ENCODE measurements at regions of chr7 and their contacts with region 1.

Region 1: GRCh38 chr7:19700936-19701335 is 7.9 kb downstream of the POLR1F start:
- DNase-seq: no peak
- H3K4me3 ChIP-seq: no peak overlapping the region
- H3K27ac ChIP-seq: no peak overlapping the region
- H3K4me1 ChIP-seq: no peaks in the 10 kb centered on the region
- H3K27me3 ChIP-seq: no peaks in the 10 kb centered on the region
- CTCF ChIP-seq: no peak
- EP300 ChIP-seq: no peak
- POLR2A ChIP-seq: no peak
- RAD21 ChIP-seq: no peak

Region 2: GRCh38 chr7:19648791-19649190 is 52.1 kb before region 1 on chr7:
- CTCF ChIA-PET with region 1: no interaction called
- POLR2A ChIA-PET with region 1: no interaction called
- DNase-seq: no peak
- H3K4me3 ChIP-seq: no peak overlapping the region
- H3K27ac ChIP-seq: no peak overlapping the region
- H3K4me1 ChIP-seq: no peaks in the 10 kb centered on the region; a peak in 1 of 7 replicates
- H3K27me3 ChIP-seq: no peaks in the 10 kb centered on the region
- CTCF ChIP-seq: no peak
- EP300 ChIP-seq: no peak
- POLR2A ChIP-seq: no peak
- RAD21 ChIP-seq: no peak

Region 3: DNA sequence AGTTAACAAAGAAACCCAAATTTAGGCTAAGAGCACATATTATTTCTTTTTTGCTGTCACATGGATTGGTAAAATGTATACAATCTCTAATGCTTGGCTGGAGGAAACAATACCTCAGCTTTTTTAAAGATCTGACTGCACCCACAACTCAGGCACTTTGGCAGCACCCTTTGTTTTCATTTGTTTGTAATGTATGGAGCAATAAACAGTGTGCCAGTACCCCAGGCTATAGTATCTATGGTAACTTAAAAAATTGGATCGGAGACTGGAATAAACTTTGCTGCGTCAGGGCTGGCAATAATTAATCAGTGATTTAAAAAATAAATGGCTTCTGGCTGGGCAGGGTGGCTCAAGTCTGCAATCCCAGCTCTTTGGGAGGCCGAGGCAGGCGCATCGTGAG is 19.3 kb before region 1 on chr7:
- CTCF ChIA-PET with region 1: no interaction called
- POLR2A ChIA-PET with region 1: no interaction called
- DNase-seq: no peak
- H3K4me3 ChIP-seq: no peak overlapping the region
- H3K27ac ChIP-seq: no peak overlapping the region
- H3K4me1 ChIP-seq: no peaks in the 10 kb centered on the region
- H3K27me3 ChIP-seq: no peaks in the 10 kb centered on the region
- CTCF ChIP-seq: no peak
- EP300 ChIP-seq: no peak
- POLR2A ChIP-seq: no peak
- RAD21 ChIP-seq: no peak

Region 4: GRCh38 chr7:19713676-19714075 is 12.7 kb after region 1 on chr7:
- CTCF ChIA-PET with region 1: interaction called, 16 read pairs
- POLR2A ChIA-PET with region 1: interaction called, 6 read pairs
- DNase-seq: no peak
- H3K4me3 ChIP-seq: no peak overlapping the region
- H3K27ac ChIP-seq: no peak overlapping the region
- H3K4me1 ChIP-seq: no peaks in the 10 kb centered on the region
- H3K27me3 ChIP-seq: no peaks in the 10 kb centered on the region
- CTCF ChIP-seq: peak in 2 of 3 experiments; percentile 24 to 48; a peak in 2 of 4 replicates
- EP300 ChIP-seq: no peak
- POLR2A ChIP-seq: no peak
- RAD21 ChIP-seq: peak; percentile 61 to 62